Activated T-helper 1 cell treated with anti-CD3 and anti-CD28 coated beads, Interleukin-12 subunit alpha, Interleukin-12 subunit beta, Interleukin-2, Interleukin-4 antibody, amounts not matched to agents 30 ng/mL and 10 ng/mL and 1 ng/mL, durations not matched to agents 14 hours and 24 hours and 36 hours (primary cell): ENCODE measurements at regions of chr2 and their contacts with region 1.

Region 1: DNA sequence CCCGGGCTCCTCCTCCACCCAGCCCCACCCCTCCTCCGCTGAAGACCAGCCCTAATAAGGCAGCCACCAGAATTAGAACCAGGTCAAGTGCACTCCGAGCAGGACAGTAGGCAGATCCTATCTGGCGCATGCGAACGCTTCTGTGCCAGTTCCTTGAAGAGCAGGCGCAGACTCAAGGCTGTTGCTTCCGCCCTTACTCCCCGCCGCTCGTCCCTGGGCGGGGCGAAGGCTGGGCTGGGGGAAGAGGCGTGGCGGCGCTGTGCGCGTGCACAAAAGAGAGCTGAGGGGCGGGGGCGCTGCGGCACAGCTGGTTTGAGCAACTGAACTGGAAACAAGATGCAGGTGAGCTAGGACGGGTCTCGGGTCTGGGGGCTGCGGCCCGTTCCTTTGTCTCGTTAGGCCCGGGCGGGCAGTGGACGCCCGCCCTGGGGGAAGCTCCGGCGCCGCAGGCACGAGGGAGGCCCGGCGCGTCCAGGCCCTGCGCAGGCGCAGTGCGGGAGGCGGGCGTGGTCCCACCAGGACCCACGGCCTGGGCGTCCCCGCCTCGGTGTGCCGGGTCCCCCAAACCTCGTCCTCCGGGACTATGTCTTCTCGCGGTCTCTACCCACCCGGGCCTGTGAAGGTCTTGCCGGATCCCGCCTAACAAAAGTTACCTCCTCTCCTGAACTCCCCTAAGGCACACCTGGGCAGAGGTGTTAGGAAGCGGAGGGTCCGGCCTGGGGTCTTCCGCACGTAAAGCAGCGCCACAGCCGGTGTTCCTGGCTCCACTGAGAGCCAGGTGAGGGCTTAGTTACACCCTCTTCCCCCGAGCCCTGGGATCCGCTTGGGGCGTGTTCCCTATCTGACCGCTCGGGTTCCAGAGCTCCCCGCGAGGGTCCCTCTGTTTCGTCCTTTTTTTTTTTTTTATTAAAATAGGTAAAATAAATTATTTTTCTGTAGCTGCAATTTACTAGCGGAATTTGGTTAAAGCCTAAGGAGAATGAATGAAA is at the start of gene PDCL3:
- DNase-seq: peak; percentile 93
- H3K4me3 Mint-ChIP-seq: peak within 1 kb of the TSS; percentile 97
- H3K27ac Mint-ChIP-seq: peak within 1 kb of the TSS; percentile 99
- H3K4me1 Mint-ChIP-seq: peaks cover 52% of the 10 kb centered on the region
- H3K27me3 Mint-ChIP-seq: no peaks in the 10 kb centered on the region
- total RNA-seq, gene PDCL3: 39.2 and 45.5 TPM in 2 replicates

Region 2: DNA sequence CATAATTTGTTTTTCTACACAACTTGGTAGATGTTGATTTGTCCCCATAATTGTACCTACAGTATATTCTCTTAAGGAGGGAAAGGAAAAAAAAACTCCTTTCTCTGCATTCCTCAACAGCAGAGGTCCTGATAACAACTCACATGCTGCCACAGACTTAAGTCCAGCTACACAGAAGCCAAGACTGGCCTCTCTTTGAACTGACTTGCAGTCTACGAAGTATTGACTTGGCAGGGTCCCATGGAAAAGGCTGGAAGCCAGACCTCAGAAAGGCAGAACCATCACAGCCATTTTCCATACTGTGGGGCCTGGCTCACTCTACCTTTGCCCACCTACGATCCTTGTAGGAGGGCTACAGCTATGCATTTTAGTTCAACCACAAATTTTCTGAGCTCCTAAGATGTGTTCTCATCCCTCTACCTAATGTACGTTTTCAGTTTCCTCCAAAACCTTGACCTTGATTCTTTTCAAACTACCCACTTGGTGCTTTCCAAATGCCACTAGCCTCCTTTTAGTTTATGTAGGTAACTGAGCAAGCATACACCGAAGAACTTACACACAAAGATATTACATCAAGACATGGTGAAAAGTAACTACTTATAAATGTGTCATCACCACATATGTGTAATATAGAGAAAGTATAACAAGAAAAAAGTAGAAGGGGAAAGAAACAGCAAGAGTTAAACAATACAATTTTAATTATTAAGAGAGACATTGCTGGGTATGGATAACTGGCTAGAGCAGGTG is 252.9 kb before region 1 on chr2:
- intact Hi-C with region 1: no loop called
- DNase-seq: no peak
- H3K4me3 Mint-ChIP-seq: no peak overlapping the region
- H3K27ac Mint-ChIP-seq: no peak overlapping the region
- H3K4me1 Mint-ChIP-seq: no peaks in the 10 kb centered on the region
- H3K27me3 Mint-ChIP-seq: peaks cover 30% of the 10 kb centered on the region

Region 3: GRCh38 chr2:100416935-100417710 is 145.9 kb before region 1 on chr2 and contains the start of gene CHST10:
- intact Hi-C with region 1: loop called (anchors 2 kb)
- DNase-seq: peak; percentile 44
- H3K4me3 Mint-ChIP-seq: peak within 1 kb of the TSS; percentile 88
- H3K27ac Mint-ChIP-seq: peak within 1 kb of the TSS; percentile 66
- H3K4me1 Mint-ChIP-seq: peaks cover 13% of the 10 kb centered on the region
- H3K27me3 Mint-ChIP-seq: peaks cover 18% of the 10 kb centered on the region
- total RNA-seq, gene CHST10: 7.4 and 7.8 TPM in 2 replicates

Region 4: DNA sequence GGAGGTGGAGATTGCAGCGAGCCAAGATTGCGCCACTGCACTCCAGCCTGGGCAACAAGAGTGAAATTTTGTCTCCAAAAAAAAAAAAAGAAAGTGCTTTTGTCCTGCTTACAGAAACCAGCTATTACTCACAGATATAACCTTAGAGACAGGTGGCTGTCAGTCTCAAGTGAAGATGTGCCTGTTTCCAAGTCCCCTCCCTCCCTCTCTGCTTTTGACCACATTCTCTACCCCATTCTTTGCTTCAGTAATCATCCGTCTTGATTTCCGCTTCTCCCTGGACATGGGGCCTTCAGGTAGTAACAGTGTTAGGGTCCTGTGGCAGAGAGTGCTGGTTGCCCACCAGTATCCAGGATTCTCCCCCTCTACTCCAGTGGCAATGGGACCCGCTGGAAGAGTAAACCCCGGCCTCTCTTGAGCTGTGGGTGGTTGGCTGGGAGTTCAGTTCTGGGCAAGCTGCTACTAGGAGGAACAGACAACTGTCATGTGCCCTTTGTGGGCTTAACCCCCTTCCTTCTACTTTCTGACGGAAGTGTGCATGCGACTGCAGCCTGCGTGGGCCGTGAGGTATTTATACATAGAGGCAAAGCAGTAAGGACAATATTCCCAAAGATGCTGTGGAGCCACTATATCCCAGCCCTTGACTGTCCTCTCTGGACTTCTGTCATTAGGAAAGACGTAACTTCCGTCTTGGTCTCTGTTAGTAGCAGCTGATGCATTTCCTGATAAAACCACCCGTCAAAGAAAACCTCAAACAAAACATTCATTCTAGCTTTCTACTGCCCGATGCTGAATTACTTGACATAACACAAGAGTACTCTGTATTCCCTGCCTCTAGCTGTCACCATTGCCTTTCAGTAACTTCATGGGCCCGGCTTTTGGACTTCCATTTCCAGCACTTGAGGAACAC is 17.6 kb after region 1 on chr2:
- intact Hi-C with region 1: loop called (anchors 1 kb)
- DNase-seq: peak; percentile 37
- H3K4me3 Mint-ChIP-seq: peak overlapping the region; percentile 63
- H3K27ac Mint-ChIP-seq: peak overlapping the region; percentile 85
- H3K4me1 Mint-ChIP-seq: peaks cover 42% of the 10 kb centered on the region
- H3K27me3 Mint-ChIP-seq: peaks cover 2% of the 10 kb centered on the region

Region 5: GRCh38 chr2:100588071-100588786 is 25.2 kb after region 1 on chr2:
- intact Hi-C with region 1: loop called (anchors 1 kb)
- DNase-seq: peak; percentile 44
- H3K4me3 Mint-ChIP-seq: peak overlapping the region; percentile 2
- H3K27ac Mint-ChIP-seq: peak overlapping the region; percentile 59
- H3K4me1 Mint-ChIP-seq: peaks cover 57% of the 10 kb centered on the region
- H3K27me3 Mint-ChIP-seq: peaks cover 6% of the 10 kb centered on the region

Region 6: GRCh38 chr2:101151141-101151858 is 588.3 kb after region 1 on chr2 and contains the start of gene TBC1D8:
- intact Hi-C with region 1: loop called (anchors 1 kb)
- DNase-seq: peak; percentile 63
- H3K4me3 Mint-ChIP-seq: peak within 1 kb of the TSS; percentile 75
- H3K27ac Mint-ChIP-seq: no peak within 1 kb of the TSS
- H3K4me1 Mint-ChIP-seq: peaks cover 11% of the 10 kb centered on the region
- H3K27me3 Mint-ChIP-seq: peaks cover 60% of the 10 kb centered on the region
- total RNA-seq, gene TBC1D8: 0.91 and 1.1 TPM in 2 replicates